ENCODE measurements at regions of chr4 and their contacts with region 1.

Region 1: DNA sequence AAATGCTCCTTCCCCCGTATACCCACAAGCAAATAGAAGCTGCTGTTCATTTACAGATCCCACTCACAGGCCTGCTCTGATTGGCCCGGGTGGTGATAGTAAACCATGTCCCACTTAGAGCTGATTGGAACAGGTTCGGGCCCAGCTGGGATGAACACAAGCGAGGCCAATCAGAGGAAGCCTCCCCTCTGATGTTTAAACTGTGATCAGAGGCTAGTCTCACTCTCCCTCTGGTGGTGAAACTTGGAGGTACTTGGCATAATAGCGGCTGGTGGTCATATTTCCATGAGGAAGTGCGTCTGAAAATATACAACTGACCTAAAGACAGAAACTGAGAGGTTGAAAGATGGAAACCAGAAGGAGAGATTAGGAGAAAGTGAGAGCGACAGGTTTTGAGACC is 51.5 kb upstream of the TRPC3 start:
- DNase-seq: peak; percentile 64
- ATAC-seq: peak; percentile 99
- H3K4me3 ChIP-seq: no peak overlapping the region
- H3K27ac ChIP-seq: no peak overlapping the region
- H3K4me1 ChIP-seq: 0 out of 2 replicates have a peak, but pooled peaks cover 6% of the 10 kb centered on the region
- H3K27me3 ChIP-seq: no peaks in the 10 kb centered on the region; a peak in 1 of 5 replicates
- CTCF ChIP-seq: peak; percentile 72
- EP300 ChIP-seq: no peak
- POLR2A ChIP-seq: no peak
- RAD21 ChIP-seq: peak; percentile 68

Region 2: GRCh38 chr4:121908346-121908745 is 95.0 kb before region 1 on chr4:
- CTCF ChIA-PET with region 1: no interaction called
- POLR2A ChIA-PET with region 1: no interaction called
- in situ Hi-C with region 1: loop called (anchors 5 kb)
- intact Hi-C with region 1: no loop called
- DNase-seq: no peak
- ATAC-seq: no peak
- H3K4me3 ChIP-seq: no peak overlapping the region
- H3K27ac ChIP-seq: no peak overlapping the region
- H3K4me1 ChIP-seq: no peaks in the 10 kb centered on the region
- H3K27me3 ChIP-seq: no peaks in the 10 kb centered on the region; a peak in 1 of 5 replicates
- CTCF ChIP-seq: no peak
- EP300 ChIP-seq: no peak
- POLR2A ChIP-seq: no peak
- RAD21 ChIP-seq: no peak

Region 3: DNA sequence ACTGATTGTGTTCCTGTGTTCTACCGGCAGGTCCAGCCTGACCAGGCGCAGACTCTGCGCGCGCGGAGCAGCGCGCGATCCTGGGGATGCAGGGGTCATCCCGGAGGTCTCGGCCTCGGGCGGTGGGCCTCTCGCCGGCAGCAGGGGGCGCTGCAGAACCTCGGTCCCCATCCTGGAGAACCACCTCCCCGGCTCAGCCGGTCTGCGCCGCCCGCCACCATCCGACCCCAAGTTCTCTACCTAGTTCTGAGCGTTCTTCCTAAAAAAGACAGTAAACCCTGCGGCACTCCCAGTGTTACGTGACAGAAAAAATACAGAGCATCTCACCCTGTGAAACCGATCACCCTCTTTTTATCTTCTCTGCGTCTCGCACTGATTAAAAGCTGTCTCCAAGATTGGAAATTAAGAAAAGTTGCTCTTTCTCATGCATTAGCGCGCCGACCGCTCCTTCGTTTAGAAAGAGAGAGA is 53.1 kb before region 1 on chr4:
- CTCF ChIA-PET with region 1: interaction called, 4 read pairs
- POLR2A ChIA-PET with region 1: no interaction called
- in situ Hi-C with region 1: no loop called
- intact Hi-C with region 1: loop called (anchors 1 kb)
- DNase-seq: peak; percentile 20
- ATAC-seq: peak; percentile 96
- H3K4me3 ChIP-seq: peak overlapping the region in 2 of 3 experiments; percentile 40 to 60; a peak in 4 of 6 replicates
- H3K27ac ChIP-seq: no peak overlapping the region
- H3K4me1 ChIP-seq: peaks cover 14% of the 10 kb centered on the region
- H3K27me3 ChIP-seq: peaks cover 7 to 51% of the 10 kb centered on the region in 2 experiments
- CTCF ChIP-seq: peak; percentile 81
- EP300 ChIP-seq: no peak
- POLR2A ChIP-seq: no peak
- RAD21 ChIP-seq: peak; percentile 80